ENCODE measurements at regions of chr3 and their contacts with region 1.

Region 1: DNA sequence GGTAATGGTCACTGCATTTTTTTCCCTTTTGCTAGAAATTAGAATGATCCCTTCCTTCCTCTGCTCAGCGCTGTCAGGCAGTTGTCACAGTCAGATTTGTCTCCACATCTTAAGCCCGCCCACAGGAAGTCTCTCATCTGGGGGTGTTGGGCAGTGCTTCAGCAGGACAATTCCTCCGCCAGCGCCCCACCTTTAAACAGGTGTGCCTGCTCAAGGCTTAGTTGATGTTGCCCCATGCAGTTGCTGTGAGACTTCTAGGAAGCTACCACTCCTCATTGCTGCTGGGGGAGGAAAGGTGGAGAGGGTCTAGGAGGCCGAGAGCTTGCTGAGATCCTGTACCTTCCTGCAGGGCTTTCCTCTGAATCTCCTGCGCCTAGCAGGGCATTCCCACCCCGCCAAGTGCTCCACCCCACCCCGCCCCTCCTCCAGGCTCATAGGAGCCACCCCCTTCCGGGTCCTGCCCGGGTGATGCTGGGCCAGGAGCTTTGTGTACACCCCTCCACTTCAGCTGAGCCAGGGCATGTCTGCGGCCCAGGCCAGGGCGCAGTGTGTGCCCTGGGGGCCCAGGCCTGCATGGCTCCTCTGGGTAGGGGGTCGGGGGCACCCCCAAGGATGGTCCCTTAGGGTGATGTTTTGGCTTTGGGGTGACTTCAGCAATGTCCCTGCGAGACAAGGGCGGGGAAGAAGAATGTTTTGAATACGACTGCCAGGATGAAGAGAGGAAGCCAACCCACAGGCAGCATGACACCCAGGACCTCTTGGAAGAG is 68.7 kb downstream of the TRAK1 start:
- DNase-seq: peak; percentile 88
- H3K4me3 ChIP-seq: peak overlapping the region; percentile 67
- H3K27ac ChIP-seq: peak overlapping the region; percentile 66
- H3K4me1 ChIP-seq: peaks cover 70% of the 10 kb centered on the region
- CTCF ChIP-seq: no peak

Region 2: GRCh38 chr3:41997702-41998550 is 162.0 kb before region 1 on chr3:
- CTCF ChIA-PET with region 1: no interaction called
- POLR2A ChIA-PET with region 1: no interaction called
- intact Hi-C with region 1: no loop called
- DNase-seq: no peak
- H3K4me3 ChIP-seq: no peak overlapping the region
- H3K27ac ChIP-seq: no peak overlapping the region
- H3K4me1 ChIP-seq: peaks cover 4% of the 10 kb centered on the region
- CTCF ChIP-seq: peak; percentile 52

Region 3: DNA sequence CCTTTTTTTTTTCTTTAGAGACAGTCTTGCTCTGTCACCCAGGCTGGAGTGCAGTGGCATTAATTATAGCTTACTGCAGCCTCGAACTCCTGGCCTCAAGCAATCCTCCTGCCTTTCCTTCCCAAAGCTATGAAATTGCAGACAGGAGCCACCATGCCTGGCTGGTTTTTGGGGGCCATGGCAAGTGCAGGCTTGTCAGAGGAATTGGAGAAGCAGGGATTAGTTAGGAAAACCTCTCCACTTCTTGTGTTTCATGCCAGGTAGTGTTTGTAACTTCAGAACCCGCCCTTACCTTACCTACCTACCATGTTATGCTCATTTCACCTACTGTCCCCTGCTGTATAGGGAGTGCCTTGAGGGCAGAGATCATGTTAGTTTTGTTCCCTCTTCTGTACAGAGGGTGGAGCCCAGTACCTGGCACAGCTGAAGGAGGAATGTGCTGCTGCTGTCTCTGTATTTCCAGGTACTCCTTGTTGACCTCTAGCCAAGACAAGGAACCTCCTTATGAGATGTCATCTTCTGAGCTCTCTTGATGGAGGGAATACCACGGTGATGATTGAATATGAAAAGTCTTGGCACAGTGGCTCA is 24.9 kb before region 1 on chr3:
- CTCF ChIA-PET with region 1: no interaction called
- POLR2A ChIA-PET with region 1: interaction called, 10 read pairs
- intact Hi-C with region 1: no loop called
- DNase-seq: no peak
- H3K4me3 ChIP-seq: no peak overlapping the region
- H3K27ac ChIP-seq: no peak overlapping the region
- H3K4me1 ChIP-seq: peaks cover 16% of the 10 kb centered on the region
- CTCF ChIP-seq: no peak

Region 4: GRCh38 chr3:42173307-42173706 is 13.4 kb after region 1 on chr3:
- CTCF ChIA-PET with region 1: interaction called, 4 read pairs
- POLR2A ChIA-PET with region 1: interaction called, 38 read pairs
- intact Hi-C with region 1: no loop called
- DNase-seq: peak; percentile 45
- H3K4me3 ChIP-seq: peak overlapping the region; percentile 25
- H3K27ac ChIP-seq: peak overlapping the region; percentile 99
- H3K4me1 ChIP-seq: peaks cover 95% of the 10 kb centered on the region
- CTCF ChIP-seq: no peak

Region 5: GRCh38 chr3:42179110-42179725 is 19.3 kb after region 1 on chr3:
- CTCF ChIA-PET with region 1: interaction called, 4 read pairs
- POLR2A ChIA-PET with region 1: interaction called, 12 read pairs
- intact Hi-C with region 1: no loop called
- DNase-seq: no peak
- H3K4me3 ChIP-seq: no peak overlapping the region
- H3K27ac ChIP-seq: peak overlapping the region; percentile 10
- H3K4me1 ChIP-seq: peaks cover 68% of the 10 kb centered on the region
- CTCF ChIP-seq: no peak

Measured in OCI-LY7 (cell line).